PC-9 (cell line): ENCODE measurements at regions of chr9 and their contacts with region 1.

Region 1: GRCh38 chr9:113876151-113876992 is at the start of gene ZNF618:
- DNase-seq: peak in 1 of 2 experiments; percentile 17
- H3K4me3 ChIP-seq: peak within 1 kb of the TSS; percentile 80
- H3K27ac ChIP-seq: no peak within 1 kb of the TSS
- H3K4me1 ChIP-seq: no peaks in the 10 kb centered on the region
- H3K27me3 ChIP-seq: peaks cover 53% of the 10 kb centered on the region
- CTCF ChIP-seq: peak; percentile 63; the same call in 1 of the 2 replicates
- total RNA-seq, gene ZNF618: 0.20 and 0.23 TPM in 2 replicates

Region 2: GRCh38 chr9:113675475-113675941 is 200.9 kb before region 1 on chr9:
- CTCF ChIA-PET with region 1: interaction called, 10 read pairs
- POLR2A ChIA-PET with region 1: no interaction called
- intact Hi-C with region 1: no loop called
- DNase-seq: peak in 1 of 2 experiments; percentile 15
- H3K4me3 ChIP-seq: no peak overlapping the region
- H3K27ac ChIP-seq: no peak overlapping the region
- H3K4me1 ChIP-seq: no peaks in the 10 kb centered on the region
- H3K27me3 ChIP-seq: peaks cover 89% of the 10 kb centered on the region
- CTCF ChIP-seq: no peak

Region 3: GRCh38 chr9:113682297-113682771 is 194.0 kb before region 1 on chr9:
- CTCF ChIA-PET with region 1: interaction called, 4 read pairs
- POLR2A ChIA-PET with region 1: no interaction called
- intact Hi-C with region 1: loop called (anchors 2 kb)
- DNase-seq: peak in 1 of 2 experiments; percentile 70
- H3K4me3 ChIP-seq: no peak overlapping the region
- H3K27ac ChIP-seq: no peak overlapping the region
- H3K4me1 ChIP-seq: no peaks in the 10 kb centered on the region
- H3K27me3 ChIP-seq: peaks cover 88% of the 10 kb centered on the region
- CTCF ChIP-seq: peak; percentile 90

Region 4: GRCh38 chr9:113737517-113738271 is 138.7 kb before region 1 on chr9:
- CTCF ChIA-PET with region 1: no interaction called
- POLR2A ChIA-PET with region 1: no interaction called
- intact Hi-C with region 1: loop called (anchors 10 kb)
- DNase-seq: peak in 1 of 2 experiments; percentile 26
- H3K4me3 ChIP-seq: no peak overlapping the region
- H3K27ac ChIP-seq: no peak overlapping the region
- H3K4me1 ChIP-seq: no peaks in the 10 kb centered on the region
- H3K27me3 ChIP-seq: peaks cover 55% of the 10 kb centered on the region; the same call in 1 of the 2 replicates
- CTCF ChIP-seq: peak; percentile 80